K562 (cell line): ENCODE measurements at regions of chr3 and their contacts with region 1.

Region 1: GRCh38 chr3:72144773-72145505 is 360.0 kb upstream of the PROK2 start:
- DNase-seq: peak; percentile 74 to 93 (median 86)
- ATAC-seq: peak; percentile 88
- H3K4me3 ChIP-seq: no peak overlapping the region
- H3K27ac ChIP-seq: peak overlapping the region; percentile 70
- H3K4me1 ChIP-seq: peaks cover 5 to 45% of the 10 kb centered on the region in 2 experiments; a peak in 4 of 5 replicates
- H3K27me3 ChIP-seq: no peaks in the 10 kb centered on the region
- CTCF ChIP-seq: no peak
- EP300 ChIP-seq: peak; percentile 100
- POLR2A ChIP-seq: no peak
- RAD21 ChIP-seq: peak; percentile 25 to 57

Region 2: DNA sequence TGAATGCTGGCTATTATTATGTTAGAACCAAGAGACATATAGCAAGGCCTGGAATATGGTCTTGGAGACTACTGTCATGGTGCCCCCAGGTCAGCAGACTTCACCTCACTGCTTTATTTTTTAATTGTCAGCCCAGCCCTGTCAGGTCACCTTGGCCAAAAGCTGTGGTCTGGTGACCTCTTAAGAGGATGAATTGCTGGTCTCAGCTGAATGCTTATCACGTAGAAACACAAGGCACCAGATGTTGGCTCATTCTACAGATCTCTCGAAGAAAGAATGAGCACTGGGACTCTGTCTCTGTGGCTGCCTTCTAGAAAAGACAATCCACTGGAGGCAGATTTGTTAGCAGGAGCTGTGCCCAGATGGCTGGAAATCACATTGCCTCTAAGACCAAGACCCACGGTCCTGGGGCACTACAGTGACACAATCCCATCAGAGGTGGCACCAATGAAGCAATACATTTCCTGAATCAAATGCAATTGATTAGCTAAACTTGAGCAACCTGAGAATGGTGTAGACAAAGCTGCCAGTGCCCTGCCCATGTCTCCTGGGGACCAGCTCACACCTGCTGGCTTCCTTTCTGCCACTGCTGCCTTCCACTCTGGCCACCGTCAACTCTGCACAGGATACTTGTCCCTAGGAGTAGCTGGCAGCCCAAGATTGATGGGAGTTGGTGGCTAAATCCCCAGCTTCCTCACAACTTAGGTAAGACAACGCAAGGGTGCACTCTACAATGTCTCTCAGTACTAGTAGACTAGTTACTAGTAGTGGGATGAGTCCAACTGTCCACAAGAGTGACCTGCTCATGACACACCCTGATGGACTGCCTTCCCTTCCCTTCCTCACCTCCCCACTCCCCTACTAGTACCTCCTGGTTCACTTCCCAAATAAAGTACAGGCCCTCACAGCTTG is 24.9 kb after region 1 on chr3:
- CTCF ChIA-PET with region 1: no interaction called
- POLR2A ChIA-PET with region 1: interaction called, 3 read pairs
- in situ Hi-C with region 1: no loop called
- intact Hi-C with region 1: loop called (anchors 2 kb)
- DNase-seq: peak; percentile 74 to 84 (median 80)
- ATAC-seq: peak; percentile 94
- H3K4me3 ChIP-seq: no peak overlapping the region
- H3K27ac ChIP-seq: no peak overlapping the region; the same call in 2 of the 3 replicates
- H3K4me1 ChIP-seq: peaks cover 9 to 33% of the 10 kb centered on the region in 2 experiments; a peak in 3 of 5 replicates
- H3K27me3 ChIP-seq: no peaks in the 10 kb centered on the region
- CTCF ChIP-seq: no peak
- EP300 ChIP-seq: peak; percentile 92
- POLR2A ChIP-seq: no peak
- RAD21 ChIP-seq: peak in 1 of 2 experiments; percentile 32; a peak in 1 of 4 replicates